ENCODE measurements at regions of chr1 and their contacts with region 1.

Region 1: DNA sequence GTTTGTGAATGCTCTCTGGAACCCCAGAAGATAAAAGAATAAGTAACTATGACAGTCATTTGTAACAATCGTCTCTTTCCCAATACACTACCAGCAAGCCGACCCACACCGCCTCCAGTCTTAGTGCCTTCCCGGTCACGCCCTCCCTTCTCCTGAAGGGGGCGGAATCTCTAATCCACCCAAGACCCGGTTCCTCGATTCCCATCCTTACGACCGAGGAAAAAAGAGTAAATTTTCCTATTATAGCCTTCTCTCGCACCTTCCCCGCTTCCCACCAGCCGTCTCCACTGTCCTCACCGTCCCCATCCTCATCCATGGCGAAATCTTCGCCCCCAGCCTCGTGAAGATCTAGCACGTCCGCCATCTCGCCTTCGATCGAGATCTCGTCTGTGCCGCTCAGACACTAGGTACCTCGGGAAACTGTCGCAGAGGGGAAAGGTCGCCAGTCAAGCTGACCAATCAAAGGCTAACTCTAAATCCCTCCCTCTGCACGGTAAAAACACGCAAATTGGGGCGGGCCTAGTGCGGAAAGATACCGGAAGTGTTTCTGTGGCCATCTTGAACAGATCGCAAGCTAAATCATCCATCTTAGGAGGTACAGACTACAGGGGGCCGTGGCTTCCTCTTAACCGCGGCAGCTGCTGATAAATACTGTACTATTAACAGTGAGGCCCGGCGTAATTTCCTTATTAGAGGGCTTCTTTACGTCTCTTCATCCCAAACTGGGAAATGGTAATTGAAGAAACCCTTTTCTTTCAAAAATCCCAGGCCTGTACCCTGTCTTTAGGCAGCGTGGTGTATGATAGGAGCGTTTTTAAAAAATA is at the start of gene RBM8A:
- DNase-seq: peak; percentile 77
- ATAC-seq: peak; percentile 97
- H3K4me3 Mint-ChIP-seq: no peak within 1 kb of the TSS
- H3K27ac Mint-ChIP-seq: peak within 1 kb of the TSS; percentile 74
- H3K4me1 Mint-ChIP-seq: peaks cover 15% of the 10 kb centered on the region
- H3K27me3 Mint-ChIP-seq: no peaks in the 10 kb centered on the region
- CTCF ChIP-seq: no peak
- total RNA-seq, gene RBM8A: 178 and 201 TPM in 2 replicates

Region 2: GRCh38 chr1:145957443-145958319 is 30.4 kb after region 1 on chr1 and contains the start of gene LIX1L:
- CTCF ChIA-PET with region 1: interaction called, 23 read pairs
- POLR2A ChIA-PET with region 1: interaction called, 128 read pairs
- intact Hi-C with region 1: loop called (anchors 1 kb)
- DNase-seq: peak; percentile 87
- ATAC-seq: peak; percentile 89
- H3K4me3 Mint-ChIP-seq: peak within 1 kb of the TSS; percentile 96
- H3K27ac Mint-ChIP-seq: peak within 1 kb of the TSS; percentile 94
- H3K4me1 Mint-ChIP-seq: peaks cover 64% of the 10 kb centered on the region
- H3K27me3 Mint-ChIP-seq: no peaks in the 10 kb centered on the region
- CTCF ChIP-seq: no peak
- total RNA-seq, gene LIX1L: 30.1 and 31.7 TPM in 2 replicates

Region 3: GRCh38 chr1:145963995-145964901 is 37.0 kb after region 1 on chr1 and contains the starts of genes ANKRD34A and POLR3GL:
- CTCF ChIA-PET with region 1: interaction called, 23 read pairs
- POLR2A ChIA-PET with region 1: interaction called, 128 read pairs
- intact Hi-C with region 1: loop called (anchors 2 kb)
- DNase-seq: peak; percentile 78
- ATAC-seq: peak; percentile 88
- H3K4me3 Mint-ChIP-seq: peak within 1 kb of the TSS; percentile 97
- H3K27ac Mint-ChIP-seq: peak within 1 kb of the TSS; percentile 96
- H3K4me1 Mint-ChIP-seq: peaks cover 52% of the 10 kb centered on the region
- H3K27me3 Mint-ChIP-seq: no peaks in the 10 kb centered on the region
- CTCF ChIP-seq: no peak
- total RNA-seq, gene ANKRD34A: 1.4 and 2.4 TPM in 2 replicates
- total RNA-seq, gene POLR3GL: 22.7 and 23.7 TPM in 2 replicates

Region 4: DNA sequence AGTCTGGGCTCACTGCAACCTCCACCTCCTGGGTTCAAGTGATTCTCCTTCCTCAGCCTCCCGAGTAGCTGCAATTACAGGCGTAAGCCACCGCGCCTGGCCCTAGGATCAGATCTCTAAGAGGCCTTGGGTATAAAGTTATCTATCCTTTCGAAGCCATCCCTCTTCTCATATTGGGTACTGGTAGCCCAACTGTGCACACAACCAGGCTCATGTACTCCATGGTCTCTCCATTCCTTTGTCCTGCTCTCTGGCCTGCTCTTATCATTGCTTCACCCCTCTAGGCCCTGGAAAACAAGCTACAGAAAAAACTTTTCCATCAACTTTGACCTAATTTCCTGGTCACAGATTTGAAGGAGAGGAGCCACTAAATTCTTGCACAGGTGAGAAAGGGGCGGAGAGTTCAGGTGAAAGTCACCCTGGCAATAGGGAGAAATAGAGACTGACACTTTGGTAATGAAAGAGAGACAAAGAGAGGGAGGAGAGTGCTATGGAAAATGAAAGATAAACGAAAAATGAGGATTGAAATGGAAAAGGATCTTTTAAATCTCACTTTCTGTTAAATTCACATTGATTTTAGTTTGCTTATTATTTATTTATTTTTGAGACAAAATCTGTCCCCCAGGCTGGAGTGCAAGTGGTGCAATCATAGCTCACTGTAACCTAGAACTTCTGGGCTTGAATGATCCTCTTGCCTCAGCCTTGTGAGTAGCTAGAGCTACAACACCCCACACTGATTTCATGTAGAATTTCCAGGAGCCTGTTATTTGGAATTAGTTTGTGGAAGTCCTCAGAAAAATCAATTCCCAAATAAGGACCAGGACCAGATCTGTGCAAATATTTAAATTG is 63.2 kb after region 1 on chr1:
- CTCF ChIA-PET with region 1: no interaction called
- POLR2A ChIA-PET with region 1: interaction called, 14 read pairs
- intact Hi-C with region 1: loop called (anchors 1 kb)
- DNase-seq: no peak
- ATAC-seq: no peak
- H3K4me3 Mint-ChIP-seq: no peak overlapping the region
- H3K27ac Mint-ChIP-seq: peak overlapping the region; percentile 61
- H3K4me1 Mint-ChIP-seq: peaks cover 72% of the 10 kb centered on the region
- H3K27me3 Mint-ChIP-seq: no peaks in the 10 kb centered on the region
- CTCF ChIP-seq: no peak

Region 5: DNA sequence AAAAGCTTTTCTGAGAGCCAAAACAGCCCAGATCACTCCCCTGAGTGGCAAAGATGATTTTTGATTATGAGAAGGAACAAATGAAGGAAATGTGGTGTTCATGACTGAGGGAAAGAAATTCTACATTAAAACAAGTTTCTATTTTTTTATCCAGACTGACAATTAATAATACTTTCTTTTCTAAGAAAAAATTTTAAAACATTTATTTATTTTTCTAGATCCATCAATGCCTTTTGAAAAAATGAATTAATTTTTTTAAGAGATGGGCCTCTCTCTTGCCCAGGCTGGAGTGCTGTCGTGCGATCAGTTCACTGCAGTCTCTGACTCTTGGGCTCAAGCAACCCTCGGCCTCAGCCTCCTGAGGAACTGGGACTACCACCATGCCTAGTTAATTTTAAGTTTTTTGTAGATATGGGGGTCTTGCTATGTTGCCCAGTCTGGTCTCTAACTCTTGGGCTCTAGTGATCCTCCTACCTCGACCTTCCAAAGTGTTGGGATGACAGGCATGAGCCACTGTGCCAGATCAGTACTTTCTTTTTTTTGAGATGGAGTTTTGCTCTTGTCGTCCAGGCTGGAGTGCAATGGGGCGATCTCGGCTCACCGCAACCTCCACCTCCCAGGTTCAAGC is 80.3 kb after region 1 on chr1:
- CTCF ChIA-PET with region 1: no interaction called
- POLR2A ChIA-PET with region 1: interaction called, 7 read pairs
- intact Hi-C with region 1: loop called (anchors 1 kb)
- DNase-seq: no peak
- ATAC-seq: no peak
- H3K4me3 Mint-ChIP-seq: no peak overlapping the region
- H3K27ac Mint-ChIP-seq: peak overlapping the region; percentile 96
- H3K4me1 Mint-ChIP-seq: peaks cover 26% of the 10 kb centered on the region
- H3K27me3 Mint-ChIP-seq: no peaks in the 10 kb centered on the region
- CTCF ChIP-seq: no peak

Region 6: GRCh38 chr1:146036965-146037646 is 109.8 kb after region 1 on chr1:
- CTCF ChIA-PET with region 1: no interaction called
- POLR2A ChIA-PET with region 1: interaction called, 22 read pairs
- intact Hi-C with region 1: loop called (anchors 5 kb)
- DNase-seq: peak; percentile 61
- ATAC-seq: peak; percentile 56
- H3K4me3 Mint-ChIP-seq: peak overlapping the region; percentile 99
- H3K27ac Mint-ChIP-seq: peak overlapping the region; percentile 98
- H3K4me1 Mint-ChIP-seq: peaks cover 43% of the 10 kb centered on the region
- H3K27me3 Mint-ChIP-seq: peaks cover 2% of the 10 kb centered on the region
- CTCF ChIP-seq: no peak